Adrenal gland (tissue), 19 donors: ENCODE measurements at regions of chr15 and their contacts with region 1.

Region 1: DNA sequence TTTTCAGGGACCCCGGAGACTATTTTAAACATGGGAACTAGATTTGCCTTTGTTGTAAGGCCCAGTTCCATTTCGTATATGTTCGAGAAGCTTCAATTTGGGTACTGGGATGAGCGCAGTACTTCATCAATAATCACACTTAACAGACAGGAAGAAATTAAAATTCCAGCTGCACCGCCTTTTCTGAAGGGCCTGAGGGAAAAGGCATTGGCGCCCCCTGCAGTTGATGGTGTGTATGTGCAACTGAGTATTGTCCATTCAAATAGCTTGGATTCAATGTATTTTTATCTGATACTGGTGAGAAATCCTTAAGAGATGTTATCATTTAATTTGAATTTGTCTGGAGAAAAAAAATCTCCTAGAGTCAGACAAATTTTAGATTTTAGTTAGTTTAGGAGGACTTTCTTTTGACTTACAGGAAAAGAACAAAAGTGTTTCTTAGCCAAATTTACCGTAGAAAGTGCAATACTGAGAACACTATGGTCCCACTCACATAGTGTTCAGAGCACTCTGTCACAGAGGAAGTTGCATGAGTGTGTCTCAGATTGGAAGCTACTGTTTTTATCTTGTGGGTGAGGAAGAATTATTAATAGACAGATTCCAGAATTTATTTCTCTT is 5.4 kb upstream of the ALDH1A2 start:
- DNase-seq: peak; percentile 28 to 76 (median 64)
- H3K4me3 ChIP-seq: no peak overlapping the region
- H3K27ac ChIP-seq: no peak overlapping the region
- H3K4me1 ChIP-seq: peaks cover 3 to 6% of the 10 kb centered on the region in 2 donors
- H3K27me3 ChIP-seq: peaks cover 38% of the 10 kb centered on the region
- CTCF ChIP-seq: peak; percentile 67 to 90 (median 74)
- POLR2A ChIP-seq: no peak

Region 2: GRCh38 chr15:57561041-57561711 is 509.7 kb before region 1 on chr15:
- intact Hi-C with region 1: loop called in 1 of 2 experiments (anchors 10 kb)
- DNase-seq: peak; percentile 87 to 94 (median 90)
- H3K4me3 ChIP-seq: no peak overlapping the region
- H3K27ac ChIP-seq: peak overlapping the region; percentile 61 to 88 (median 83)
- H3K4me1 ChIP-seq: peaks cover 3 to 24% of the 10 kb centered on the region in 2 donors
- H3K27me3 ChIP-seq: no peaks in the 10 kb centered on the region
- CTCF ChIP-seq: peak; percentile 93 to 96 (median 94)
- POLR2A ChIP-seq: peak in 1 of 2 donors; percentile 61

Region 3: DNA sequence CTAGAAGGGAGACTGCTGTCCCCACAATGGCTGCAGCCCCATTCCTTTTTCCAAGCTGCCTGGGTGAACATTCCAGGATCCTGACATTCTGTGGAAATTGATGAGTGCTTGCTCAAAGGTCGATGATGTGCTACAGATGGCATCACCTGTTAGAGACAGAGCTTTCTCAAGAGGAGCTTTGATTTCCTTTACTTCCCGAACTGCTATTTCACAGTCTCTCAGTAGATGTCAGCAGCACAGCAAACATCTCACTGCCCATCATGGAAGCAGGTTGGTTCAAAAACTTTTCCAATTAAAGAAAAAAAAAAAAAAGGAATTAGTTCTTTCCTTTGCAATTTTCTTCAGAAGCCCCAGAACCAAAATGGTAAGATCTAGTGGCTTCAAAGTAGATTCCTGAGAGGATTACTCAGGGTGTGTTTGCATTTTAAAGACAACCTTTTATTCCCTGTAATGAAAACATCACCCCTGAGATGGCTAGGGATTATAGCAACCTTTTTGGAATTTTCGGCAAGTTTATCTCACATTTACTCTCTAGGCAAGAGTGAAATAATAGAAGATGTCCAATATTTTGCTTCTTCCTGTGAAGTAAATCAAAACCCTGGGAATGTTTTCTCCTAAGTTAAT is 319.6 kb before region 1 on chr15:
- intact Hi-C with region 1: loop called in 1 of 2 experiments (anchors 10 kb)
- DNase-seq: peak in 1 of 7 donors; percentile 26
- H3K4me3 ChIP-seq: no peak overlapping the region
- H3K27ac ChIP-seq: no peak overlapping the region
- H3K4me1 ChIP-seq: no peaks in the 10 kb centered on the region
- H3K27me3 ChIP-seq: no peaks in the 10 kb centered on the region
- CTCF ChIP-seq: peak in 5 of 6 experiments; percentile 23 to 54 (median 40)
- POLR2A ChIP-seq: no peak

Region 4: DNA sequence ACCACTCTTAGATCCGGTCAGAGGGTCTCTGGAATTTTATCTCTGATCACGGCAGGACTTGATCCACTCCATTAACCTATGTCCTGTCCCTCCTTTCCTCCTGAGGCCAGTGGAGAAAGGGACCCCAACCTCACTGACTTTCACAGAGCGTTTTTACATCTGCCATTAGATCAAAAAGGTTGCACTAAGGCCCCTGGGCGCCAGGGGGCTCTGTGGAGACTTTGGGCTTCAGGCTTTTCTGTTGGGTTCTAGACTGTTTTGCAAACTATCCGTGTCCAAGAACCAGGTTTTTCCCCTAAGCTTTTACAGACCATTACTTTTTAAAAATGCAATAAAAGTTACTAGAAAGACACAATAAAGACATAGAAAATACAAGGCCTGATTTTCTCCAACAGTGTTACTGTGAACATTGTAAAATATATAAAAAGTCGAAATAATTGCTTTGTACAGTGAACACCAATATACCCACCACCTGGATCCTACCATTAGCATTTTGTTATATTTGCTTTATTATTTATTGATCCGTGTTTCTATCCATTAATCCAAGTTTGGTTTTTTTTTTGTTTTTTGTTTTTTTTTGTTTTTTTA is 204.7 kb before region 1 on chr15:
- intact Hi-C with region 1: loop called in 1 of 2 experiments (anchors 5 kb)
- DNase-seq: peak; percentile 32 to 75 (median 60)
- H3K4me3 ChIP-seq: no peak overlapping the region
- H3K27ac ChIP-seq: no peak overlapping the region
- H3K4me1 ChIP-seq: no peaks in the 10 kb centered on the region
- H3K27me3 ChIP-seq: peaks cover 27% of the 10 kb centered on the region
- CTCF ChIP-seq: peak; percentile 26 to 61 (median 53)
- POLR2A ChIP-seq: no peak

Region 5: GRCh38 chr15:58095415-58095814 is 24.5 kb after region 1 on chr15:
- intact Hi-C with region 1: no loop called
- DNase-seq: no peak
- H3K4me3 ChIP-seq: no peak overlapping the region
- H3K27ac ChIP-seq: no peak overlapping the region
- H3K4me1 ChIP-seq: no peaks in the 10 kb centered on the region
- H3K27me3 ChIP-seq: no peaks in the 10 kb centered on the region
- CTCF ChIP-seq: no peak
- POLR2A ChIP-seq: no peak

Region 6: GRCh38 chr15:58182460-58183163 is 111.7 kb after region 1 on chr15:
- intact Hi-C with region 1: loop called in 1 of 2 experiments (anchors 10 kb)
- DNase-seq: peak in 6 of 7 donors; percentile 20 to 56 (median 44)
- H3K4me3 ChIP-seq: no peak overlapping the region
- H3K27ac ChIP-seq: no peak overlapping the region
- H3K4me1 ChIP-seq: no peaks in the 10 kb centered on the region
- H3K27me3 ChIP-seq: no peaks in the 10 kb centered on the region
- CTCF ChIP-seq: peak; percentile 39 to 85 (median 73)
- POLR2A ChIP-seq: no peak